ENCODE measurements at regions of chrX and their contacts with region 1.

Region 1: GRCh38 chrX:132710656-132711155 is 221.9 kb upstream of the MBNL3 start:
- H3K4me3 Mint-ChIP-seq: no peak overlapping the region
- H3K27ac Mint-ChIP-seq: no peak overlapping the region
- H3K4me1 Mint-ChIP-seq: peaks cover 10% of the 10 kb centered on the region
- H3K27me3 Mint-ChIP-seq: peaks cover 2% of the 10 kb centered on the region

Region 2: GRCh38 chrX:131288738-131289511 is 1421.8 kb before region 1 on chrX and contains the start of gene IGSF1:
- intact Hi-C with region 1: no loop called
- H3K4me3 Mint-ChIP-seq: no peak within 1 kb of the TSS
- H3K27ac Mint-ChIP-seq: no peak within 1 kb of the TSS
- H3K4me1 Mint-ChIP-seq: no peaks in the 10 kb centered on the region
- H3K27me3 Mint-ChIP-seq: peaks cover 21% of the 10 kb centered on the region

Region 3: GRCh38 chrX:132664269-132664668 is 46.4 kb before region 1 on chrX:
- intact Hi-C with region 1: no loop called
- H3K4me3 Mint-ChIP-seq: no peak overlapping the region
- H3K27ac Mint-ChIP-seq: no peak overlapping the region
- H3K4me1 Mint-ChIP-seq: no peaks in the 10 kb centered on the region
- H3K27me3 Mint-ChIP-seq: peaks cover 5% of the 10 kb centered on the region

Region 4: DNA sequence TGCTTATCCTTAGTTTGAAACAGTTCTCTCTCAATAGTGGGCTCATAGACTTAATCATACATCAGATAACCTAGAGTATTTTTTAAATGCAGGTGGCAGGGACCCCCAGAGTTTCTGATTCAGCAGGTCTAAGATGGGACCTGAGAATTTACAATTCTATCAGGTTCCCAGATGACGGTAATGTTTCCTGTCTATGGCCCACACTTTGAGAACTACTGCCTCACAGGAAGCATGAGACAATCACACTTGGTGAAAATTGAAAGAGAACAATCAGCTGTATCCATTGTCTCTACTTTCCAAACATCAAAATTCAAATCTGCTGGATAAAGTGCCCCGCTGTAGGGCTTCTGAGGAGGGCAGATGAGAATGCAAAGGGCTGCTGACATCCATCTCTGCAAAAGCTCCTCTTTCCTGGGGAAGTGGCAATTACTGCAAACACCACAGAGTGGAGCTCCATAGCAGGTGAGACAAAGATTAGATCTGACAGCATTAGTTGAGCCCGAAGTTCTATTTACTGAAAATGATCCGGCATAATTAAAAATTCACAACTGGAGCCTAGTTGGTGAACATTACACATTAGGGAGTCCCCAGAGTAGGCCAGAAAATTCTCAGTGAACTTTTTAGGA is 34.0 kb before region 1 on chrX:
- intact Hi-C with region 1: loop called (anchors 5 kb)
- H3K4me3 Mint-ChIP-seq: no peak overlapping the region
- H3K27ac Mint-ChIP-seq: no peak overlapping the region
- H3K4me1 Mint-ChIP-seq: no peaks in the 10 kb centered on the region
- H3K27me3 Mint-ChIP-seq: no peaks in the 10 kb centered on the region

Measured in dendritic cell treated with granulocyte-macrophage colony-stimulating factor and Interleukin-4, amounts not matched to agents 40 ng/mL and 50 ng/mL, for 4 days (primary cell).